Esophagus squamous epithelium (tissue), 5 donors: ENCODE measurements at regions of chr13 and their contacts with region 1.

Region 1: GRCh38 chr13:80342471-80343380 is 1.8 kb upstream of the SPRY2 start:
- DNase-seq: no peak
- H3K4me3 ChIP-seq: peak overlapping the region; percentile 70 to 91 (median 83)
- H3K27ac ChIP-seq: peak overlapping the region; percentile 92 to 98 (median 96)
- H3K4me1 ChIP-seq: peaks cover 0 to 42% (median 0%) of the 10 kb centered on the region in 3 donors
- H3K27me3 ChIP-seq: peaks cover 0 to 5% (median 0%) of the 10 kb centered on the region in 4 donors
- CTCF ChIP-seq: peak; percentile 93 to 99 (median 96)
- POLR2A ChIP-seq: peak in 2 of 4 donors; percentile 28 to 36

Region 2: GRCh38 chr13:79480954-79481684 is 861.6 kb before region 1 on chr13 and contains the start of gene NDFIP2:
- intact Hi-C with region 1: loop called (anchors 5 kb)
- DNase-seq: peak; percentile 11
- H3K4me3 ChIP-seq: peak within 1 kb of the TSS; percentile 62 to 90 (median 84)
- H3K27ac ChIP-seq: peak within 1 kb of the TSS; percentile 79 to 94 (median 90)
- H3K4me1 ChIP-seq: peaks cover 8 to 61% (median 8%) of the 10 kb centered on the region in 3 donors
- H3K27me3 ChIP-seq: no peaks in the 10 kb centered on the region
- CTCF ChIP-seq: no peak
- POLR2A ChIP-seq: peak in 3 of 4 donors; percentile 41 to 81 (median 68)
- total RNA-seq, gene NDFIP2: 37.8 to 81.9 (median 54.8) TPM

Region 3: GRCh38 chr13:80116107-80116506 is 226.6 kb before region 1 on chr13:
- intact Hi-C with region 1: no loop called
- DNase-seq: no peak
- H3K4me3 ChIP-seq: no peak overlapping the region
- H3K27ac ChIP-seq: no peak overlapping the region
- H3K4me1 ChIP-seq: no peaks in the 10 kb centered on the region
- H3K27me3 ChIP-seq: no peaks in the 10 kb centered on the region
- CTCF ChIP-seq: no peak
- POLR2A ChIP-seq: no peak